ENCODE measurements at regions of chr11 and their contacts with region 1.

Region 1: GRCh38 chr11:133821776-133822175 is 23.5 kb downstream of the SPATA19 start:
- DNase-seq: peak in 41 of 42 donors; percentile 48 to 85 (median 71)

Region 2: DNA sequence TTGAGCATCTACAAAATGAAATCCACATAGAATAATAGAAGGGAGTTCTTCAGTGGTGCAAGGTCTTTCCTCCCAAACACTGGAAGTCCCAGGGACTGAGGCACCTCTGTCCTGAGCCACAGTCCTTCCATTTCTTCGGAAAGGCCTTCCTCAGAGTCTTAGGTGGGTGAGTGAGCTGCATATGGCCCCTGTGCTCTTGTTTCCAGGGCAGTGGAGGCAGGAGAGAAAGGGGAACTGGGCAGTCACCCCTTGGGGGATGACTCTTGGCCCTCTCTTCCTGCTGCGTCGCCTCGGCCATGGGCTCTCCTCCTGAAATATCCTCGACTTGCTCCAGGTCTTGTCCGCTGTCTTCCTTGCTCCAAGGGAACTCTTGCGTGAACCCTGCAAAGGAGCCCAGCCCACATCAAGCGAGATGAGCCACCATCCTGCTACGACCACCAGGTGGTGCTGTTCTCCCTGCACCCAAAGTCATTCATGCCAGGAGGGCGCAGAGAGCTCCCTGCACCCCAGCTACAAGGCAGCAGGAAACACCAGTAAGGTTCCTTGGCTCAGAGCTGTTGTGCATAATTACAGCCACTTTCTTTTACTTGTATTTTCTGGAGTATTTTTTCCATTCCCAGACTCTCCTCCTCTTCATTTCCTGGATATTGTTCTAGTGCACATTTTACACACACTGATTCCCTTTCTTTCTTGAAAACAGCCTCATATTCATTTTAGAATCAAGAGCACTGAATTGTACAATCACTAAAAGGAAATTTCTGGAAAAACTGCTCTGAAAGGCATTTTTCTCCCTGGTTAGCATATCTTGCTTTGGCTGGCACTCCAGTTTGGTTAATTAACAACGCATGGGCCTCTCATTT is 687.2 kb before region 1 on chr11:
- intact Hi-C with region 1: loop called (anchors 10 kb)
- DNase-seq: peak; percentile 37 to 87 (median 72)

Region 3: GRCh38 chr11:133895061-133895479 is 73.3 kb after region 1 on chr11:
- intact Hi-C with region 1: no loop called
- DNase-seq: peak in 5 of 42 donors; percentile 4 to 37 (median 31)